MCF 10A (cell line): ENCODE measurements at regions of chr3 and their contacts with region 1.

Region 1: DNA sequence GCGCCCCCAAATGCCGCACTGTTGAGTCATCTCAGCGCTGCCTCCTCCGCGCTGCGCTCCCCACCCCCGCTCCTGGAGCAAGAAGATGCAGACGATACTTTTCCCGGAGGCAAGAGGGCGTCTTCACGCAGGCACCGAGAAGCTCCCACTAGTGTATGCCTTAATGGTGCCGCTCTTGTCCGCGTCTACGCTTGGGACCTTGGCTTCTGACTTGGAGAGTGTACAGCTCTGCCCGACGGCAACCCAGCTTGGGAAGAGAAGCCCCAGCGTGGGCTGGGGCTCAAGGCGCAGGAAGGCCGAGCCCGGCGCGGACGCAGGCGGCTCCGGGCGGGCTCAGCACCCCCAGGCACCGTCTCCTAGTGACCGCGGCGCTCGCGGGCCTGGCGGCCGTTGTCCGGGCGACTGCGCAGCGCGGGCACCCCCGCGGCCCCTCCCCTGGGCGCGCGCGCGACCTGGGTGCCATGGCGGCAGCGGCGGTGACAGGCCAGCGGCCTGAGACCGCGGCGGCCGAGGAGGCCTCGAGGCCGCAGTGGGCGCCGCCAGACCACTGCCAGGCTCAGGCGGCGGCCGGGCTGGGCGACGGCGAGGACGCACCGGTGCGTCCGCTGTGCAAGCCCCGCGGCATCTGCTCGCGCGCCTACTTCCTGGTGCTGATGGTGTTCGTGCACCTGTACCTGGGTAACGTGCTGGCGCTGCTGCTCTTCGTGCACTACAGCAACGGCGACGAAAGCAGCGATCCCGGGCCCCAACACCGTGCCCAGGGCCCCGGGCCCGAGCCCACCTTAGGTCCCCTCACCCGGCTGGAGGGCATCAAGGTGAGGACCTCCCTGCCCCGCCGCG is at the start of gene P4HTM:
- DNase-seq: peak; percentile 82
- H3K4me3 Mint-ChIP-seq: peak within 1 kb of the TSS; percentile 89
- H3K27ac Mint-ChIP-seq: peak within 1 kb of the TSS; percentile 71
- H3K4me1 Mint-ChIP-seq: peaks cover 29% of the 10 kb centered on the region
- H3K27me3 Mint-ChIP-seq: no peaks in the 10 kb centered on the region
- CTCF ChIP-seq: peak; percentile 13
- total RNA-seq, gene P4HTM: 18.8 and 26.1 TPM in 2 replicates

Region 2: GRCh38 chr3:48974076-48974864 is 15.7 kb before region 1 on chr3:
- CTCF ChIA-PET with region 1: interaction called, 19 read pairs
- POLR2A ChIA-PET with region 1: interaction called, 4 read pairs
- intact Hi-C with region 1: no loop called
- DNase-seq: no peak
- H3K4me3 Mint-ChIP-seq: no peak overlapping the region
- H3K27ac Mint-ChIP-seq: no peak overlapping the region
- H3K4me1 Mint-ChIP-seq: no peaks in the 10 kb centered on the region
- H3K27me3 Mint-ChIP-seq: no peaks in the 10 kb centered on the region
- CTCF ChIP-seq: no peak

Region 3: GRCh38 chr3:49007068-49007770 is 17.2 kb after region 1 on chr3 and contains the start of gene WDR6:
- CTCF ChIA-PET with region 1: interaction called, 38 read pairs
- POLR2A ChIA-PET with region 1: interaction called, 52 read pairs
- intact Hi-C with region 1: loop called (anchors 2 kb)
- DNase-seq: peak; percentile 98
- H3K4me3 Mint-ChIP-seq: peak within 1 kb of the TSS; percentile 99
- H3K27ac Mint-ChIP-seq: peak within 1 kb of the TSS; percentile 99
- H3K4me1 Mint-ChIP-seq: peaks cover 10% of the 10 kb centered on the region
- H3K27me3 Mint-ChIP-seq: no peaks in the 10 kb centered on the region
- CTCF ChIP-seq: peak; percentile 33
- total RNA-seq, gene WDR6: 112 and 116 TPM in 2 replicates

Region 4: DNA sequence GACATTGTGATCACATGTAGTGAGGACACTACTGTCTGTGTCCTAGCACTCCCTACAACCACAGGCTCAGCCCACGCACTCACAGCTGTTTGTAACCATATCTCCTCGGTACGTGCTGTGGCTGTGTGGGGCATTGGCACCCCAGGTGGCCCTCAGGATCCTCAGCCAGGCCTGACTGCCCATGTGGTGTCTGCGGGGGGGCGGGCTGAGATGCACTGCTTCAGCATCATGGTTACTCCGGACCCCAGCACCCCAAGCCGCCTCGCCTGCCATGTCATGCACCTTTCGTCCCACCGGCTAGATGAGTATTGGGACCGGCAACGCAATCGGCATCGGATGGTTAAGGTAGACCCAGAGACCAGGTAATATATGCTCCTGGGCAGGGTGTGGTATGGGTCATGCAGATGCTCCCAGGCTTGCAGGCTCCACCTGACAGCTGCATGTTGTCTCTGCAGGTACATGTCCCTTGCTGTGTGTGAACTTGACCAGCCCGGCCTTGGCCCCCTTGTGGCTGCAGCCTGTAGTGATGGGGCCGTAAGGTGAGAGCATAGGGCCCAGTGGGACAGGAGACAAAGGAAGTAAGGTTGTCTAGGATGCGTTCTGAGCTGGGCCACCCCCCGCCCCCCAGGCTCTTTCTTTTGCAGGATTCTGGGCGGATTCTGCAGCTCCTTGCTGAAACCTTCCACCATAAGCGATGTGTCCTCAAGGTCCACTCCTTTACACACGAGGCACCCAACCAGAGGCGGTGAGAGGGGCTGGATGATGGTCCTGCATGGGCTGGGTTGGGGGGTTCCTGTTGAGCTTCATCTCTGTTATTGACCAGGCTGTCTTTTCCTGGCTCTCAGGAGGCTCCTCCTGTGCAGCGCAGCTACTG is 24.0 kb after region 1 on chr3:
- CTCF ChIA-PET with region 1: interaction called, 38 read pairs
- POLR2A ChIA-PET with region 1: interaction called, 131 read pairs
- intact Hi-C with region 1: loop called (anchors 2 kb)
- DNase-seq: peak; percentile 61
- H3K4me3 Mint-ChIP-seq: no peak overlapping the region
- H3K27ac Mint-ChIP-seq: no peak overlapping the region
- H3K4me1 Mint-ChIP-seq: no peaks in the 10 kb centered on the region
- H3K27me3 Mint-ChIP-seq: no peaks in the 10 kb centered on the region
- CTCF ChIP-seq: peak; percentile 55